CD8-positive, alpha-beta T cell (primary cell): ENCODE measurements at regions of chr12 and their contacts with region 1.

Region 1: DNA sequence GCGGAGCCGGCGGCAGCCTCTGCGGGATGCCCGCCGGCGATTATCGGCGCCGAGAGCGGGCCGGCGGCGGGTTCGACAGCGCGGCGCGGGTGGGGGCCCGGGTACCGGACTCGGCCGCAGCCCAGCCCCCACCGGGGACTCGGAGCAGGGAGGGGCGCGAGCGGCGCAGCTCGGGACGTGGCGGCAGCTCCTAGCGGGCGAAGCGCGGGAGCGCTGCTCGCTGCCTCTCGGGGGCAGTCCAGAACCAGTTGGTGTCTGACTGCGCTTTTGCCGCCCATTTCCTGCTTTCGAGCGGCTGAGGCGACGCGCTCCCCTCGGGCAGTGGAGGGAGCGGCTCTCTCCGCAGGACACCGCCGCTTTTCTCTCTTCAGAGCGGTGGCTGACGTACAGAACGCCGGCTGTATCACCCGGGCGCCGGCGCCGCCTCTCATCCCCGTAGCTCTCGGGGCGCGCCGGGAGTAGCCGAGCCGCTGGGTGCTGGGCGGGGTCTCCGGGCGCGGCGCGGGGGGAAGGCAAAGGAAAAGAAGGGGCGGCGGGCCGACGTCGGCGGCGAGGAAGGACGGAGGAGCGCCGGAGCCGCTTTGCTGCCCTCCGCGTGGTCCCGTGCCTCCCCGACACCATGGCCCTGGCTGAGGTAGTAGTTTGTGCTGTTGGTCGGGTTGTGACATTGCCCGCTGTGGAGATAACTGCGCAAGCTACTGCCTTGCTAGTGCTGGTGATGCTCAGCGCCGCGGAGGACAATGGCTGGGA is 136.6 kb downstream of the MON2 start:
- DNase-seq: peak; percentile 61 to 92 (median 79)
- ATAC-seq: peak; percentile 64
- H3K4me3 ChIP-seq: peak overlapping the region; percentile 87 to 94
- H3K4me3 Mint-ChIP-seq: peak overlapping the region; percentile 94
- H3K27ac ChIP-seq: peak overlapping the region; percentile 96 to 99
- H3K27ac Mint-ChIP-seq: peak overlapping the region; percentile 99
- H3K4me1 ChIP-seq: peaks cover 19% of the 10 kb centered on the region
- H3K4me1 Mint-ChIP-seq: peaks cover 31% of the 10 kb centered on the region
- H3K27me3 ChIP-seq: no peaks in the 10 kb centered on the region
- H3K27me3 Mint-ChIP-seq: no peaks in the 10 kb centered on the region
- CTCF ChIP-seq: peak; percentile 44

Region 2: DNA sequence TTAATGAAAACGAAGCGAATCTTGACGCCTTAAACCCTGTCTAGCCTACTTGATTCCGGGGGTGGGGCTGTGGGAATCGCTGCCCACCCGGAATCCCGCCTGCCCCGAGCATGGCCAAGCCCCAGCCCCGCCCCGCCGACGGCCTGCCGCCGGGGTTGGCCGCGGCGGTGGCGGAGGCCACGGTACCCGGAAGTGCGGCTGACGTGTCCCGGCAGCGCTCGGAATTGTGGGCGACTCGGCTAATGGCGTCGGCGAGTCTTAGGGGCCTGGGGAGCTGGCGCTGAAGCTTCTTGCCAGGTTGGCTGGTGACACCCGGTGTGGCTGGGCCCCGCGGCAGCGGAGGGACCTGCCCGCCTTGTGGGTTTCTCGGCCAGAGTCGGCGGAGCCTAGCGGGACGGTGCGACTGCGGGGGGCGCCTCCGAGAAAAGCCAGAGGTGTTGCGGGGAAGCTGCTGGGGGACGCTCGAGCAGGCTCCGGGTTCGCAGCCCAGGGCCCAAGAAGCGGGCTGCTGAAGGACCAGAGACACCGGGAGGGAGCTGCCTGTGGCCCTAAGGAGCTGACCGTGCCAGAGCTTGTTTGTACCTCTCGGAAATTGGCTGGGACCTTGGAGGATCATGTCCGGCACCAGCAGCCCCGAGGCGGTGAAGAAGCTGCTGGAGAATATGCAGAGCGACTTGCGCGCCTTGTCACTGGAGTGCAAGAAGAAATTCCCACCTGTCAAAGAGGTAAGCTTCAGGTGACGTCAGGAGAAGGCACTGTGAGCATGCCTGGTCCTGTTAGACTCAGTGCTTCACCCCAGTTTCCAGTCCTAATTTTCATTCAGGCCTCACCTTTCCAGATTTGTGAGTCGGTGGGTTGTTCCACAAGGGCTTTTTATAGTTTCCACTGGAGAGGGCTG is 136.4 kb before region 1 on chr12 and contains the start of gene MON2:
- CTCF ChIA-PET with region 1: no interaction called
- POLR2A ChIA-PET with region 1: interaction called, 10 read pairs
- intact Hi-C with region 1: loop called (anchors 1 to 2 kb)
- DNase-seq: peak; percentile 71 to 94 (median 86)
- ATAC-seq: peak; percentile 92
- H3K4me3 ChIP-seq: peak within 1 kb of the TSS; percentile 96 to 98
- H3K4me3 Mint-ChIP-seq: peak within 1 kb of the TSS; percentile 92
- H3K27ac ChIP-seq: peak within 1 kb of the TSS; percentile 85 to 96
- H3K27ac Mint-ChIP-seq: peak within 1 kb of the TSS; percentile 93
- H3K4me1 ChIP-seq: peaks cover 31% of the 10 kb centered on the region
- H3K4me1 Mint-ChIP-seq: peaks cover 29% of the 10 kb centered on the region
- H3K27me3 ChIP-seq: peaks cover 0 to 2% of the 10 kb centered on the region in 2 experiments
- H3K27me3 Mint-ChIP-seq: no peaks in the 10 kb centered on the region
- CTCF ChIP-seq: no peak
- total RNA-seq, gene MON2: 44.2 to 48.9 TPM

Region 3: GRCh38 chr12:62588916-62589315 is 14.3 kb before region 1 on chr12:
- CTCF ChIA-PET with region 1: no interaction called
- POLR2A ChIA-PET with region 1: interaction called, 10 read pairs
- intact Hi-C with region 1: no loop called
- DNase-seq: no peak
- ATAC-seq: no peak
- H3K4me3 ChIP-seq: no peak overlapping the region
- H3K4me3 Mint-ChIP-seq: no peak overlapping the region
- H3K27ac ChIP-seq: no peak overlapping the region
- H3K27ac Mint-ChIP-seq: no peak overlapping the region
- H3K4me1 ChIP-seq: no peaks in the 10 kb centered on the region
- H3K4me1 Mint-ChIP-seq: no peaks in the 10 kb centered on the region
- H3K27me3 ChIP-seq: no peaks in the 10 kb centered on the region
- H3K27me3 Mint-ChIP-seq: no peaks in the 10 kb centered on the region
- CTCF ChIP-seq: no peak

Region 4: GRCh38 chr12:62640910-62641448 is 37.7 kb after region 1 on chr12:
- CTCF ChIA-PET with region 1: no interaction called
- POLR2A ChIA-PET with region 1: interaction called, 3 read pairs
- intact Hi-C with region 1: loop called in 1 of 2 experiments (anchors 5 kb)
- DNase-seq: peak in 2 of 9 experiments; percentile 52 to 63
- ATAC-seq: peak; percentile 96
- H3K4me3 ChIP-seq: no peak overlapping the region
- H3K4me3 Mint-ChIP-seq: peak overlapping the region; percentile 33
- H3K27ac ChIP-seq: no peak overlapping the region
- H3K27ac Mint-ChIP-seq: no peak overlapping the region
- H3K4me1 ChIP-seq: no peaks in the 10 kb centered on the region
- H3K4me1 Mint-ChIP-seq: peaks cover 9% of the 10 kb centered on the region
- H3K27me3 ChIP-seq: no peaks in the 10 kb centered on the region
- H3K27me3 Mint-ChIP-seq: peaks cover 3% of the 10 kb centered on the region
- CTCF ChIP-seq: no peak

Region 5: GRCh38 chr12:63779498-63780481 is 1176.6 kb after region 1 on chr12 and contains the start of gene RXYLT1:
- CTCF ChIA-PET with region 1: no interaction called
- POLR2A ChIA-PET with region 1: no interaction called
- intact Hi-C with region 1: loop called in 1 of 2 experiments (anchors 2 kb)
- DNase-seq: peak; percentile 66 to 93 (median 83)
- ATAC-seq: peak; percentile 93
- H3K4me3 ChIP-seq: peak within 1 kb of the TSS; percentile 76 to 79
- H3K4me3 Mint-ChIP-seq: peak within 1 kb of the TSS; percentile 96
- H3K27ac ChIP-seq: peak within 1 kb of the TSS; percentile 74 to 87
- H3K27ac Mint-ChIP-seq: peak within 1 kb of the TSS; percentile 96
- H3K4me1 ChIP-seq: peaks cover 8% of the 10 kb centered on the region
- H3K4me1 Mint-ChIP-seq: peaks cover 32% of the 10 kb centered on the region
- H3K27me3 ChIP-seq: no peaks in the 10 kb centered on the region
- H3K27me3 Mint-ChIP-seq: no peaks in the 10 kb centered on the region
- CTCF ChIP-seq: no peak
- total RNA-seq, gene RXYLT1: 5.5 to 5.8 TPM

Region 6: DNA sequence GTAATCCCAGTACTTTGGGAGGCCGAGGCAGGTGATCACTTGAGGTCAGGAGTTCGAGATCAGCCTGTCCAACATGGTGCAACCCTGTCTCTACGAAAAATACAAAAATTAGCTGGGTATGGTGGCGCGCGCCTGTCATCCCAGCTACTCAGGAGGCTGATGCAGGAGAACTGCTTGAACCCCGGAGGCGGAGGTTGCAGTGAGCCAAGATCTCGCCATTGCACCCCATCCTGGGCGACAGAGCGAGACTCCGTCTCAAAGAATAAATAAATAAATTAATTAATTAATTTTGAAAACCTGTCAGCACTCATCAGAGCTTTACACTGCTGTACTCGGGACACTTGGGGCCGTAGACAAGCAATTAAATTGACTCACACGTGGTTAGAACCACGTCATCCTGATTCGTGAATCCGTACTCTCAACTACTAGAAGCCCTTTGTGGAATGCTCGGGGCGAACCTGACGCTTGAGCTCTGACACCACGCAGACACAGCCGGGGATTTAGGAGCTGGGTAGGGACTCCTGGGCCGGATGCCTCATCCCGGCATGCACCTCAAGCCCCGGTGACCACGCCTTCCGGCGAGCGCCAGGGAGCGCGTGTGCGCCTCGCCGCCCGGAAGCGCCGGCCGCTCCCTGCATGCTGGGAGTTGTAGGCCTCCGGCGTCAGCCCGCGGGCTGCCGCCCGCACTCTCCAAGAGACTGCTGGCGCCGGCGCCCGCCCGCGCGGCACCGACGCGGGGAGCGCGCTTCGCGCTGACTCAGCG is 1800.7 kb after region 1 on chr12 and contains the start of gene XPOT:
- CTCF ChIA-PET with region 1: no interaction called
- POLR2A ChIA-PET with region 1: no interaction called
- intact Hi-C with region 1: loop called in 1 of 2 experiments (anchors 5 kb)
- DNase-seq: peak; percentile 85 to 99 (median 90)
- ATAC-seq: peak; percentile 87
- H3K4me3 ChIP-seq: peak within 1 kb of the TSS; percentile 92 to 98
- H3K4me3 Mint-ChIP-seq: peak within 1 kb of the TSS; percentile 97
- H3K27ac ChIP-seq: peak within 1 kb of the TSS; percentile 79 to 85
- H3K27ac Mint-ChIP-seq: peak within 1 kb of the TSS; percentile 98
- H3K4me1 ChIP-seq: peaks cover 9% of the 10 kb centered on the region
- H3K4me1 Mint-ChIP-seq: peaks cover 28% of the 10 kb centered on the region
- H3K27me3 ChIP-seq: no peaks in the 10 kb centered on the region
- H3K27me3 Mint-ChIP-seq: no peaks in the 10 kb centered on the region
- CTCF ChIP-seq: no peak
- total RNA-seq, gene XPOT: 37.9 to 39.5 TPM